Caco-2 (cell line): ENCODE measurements at regions of chr2 and their contacts with region 1.

Region 1: DNA sequence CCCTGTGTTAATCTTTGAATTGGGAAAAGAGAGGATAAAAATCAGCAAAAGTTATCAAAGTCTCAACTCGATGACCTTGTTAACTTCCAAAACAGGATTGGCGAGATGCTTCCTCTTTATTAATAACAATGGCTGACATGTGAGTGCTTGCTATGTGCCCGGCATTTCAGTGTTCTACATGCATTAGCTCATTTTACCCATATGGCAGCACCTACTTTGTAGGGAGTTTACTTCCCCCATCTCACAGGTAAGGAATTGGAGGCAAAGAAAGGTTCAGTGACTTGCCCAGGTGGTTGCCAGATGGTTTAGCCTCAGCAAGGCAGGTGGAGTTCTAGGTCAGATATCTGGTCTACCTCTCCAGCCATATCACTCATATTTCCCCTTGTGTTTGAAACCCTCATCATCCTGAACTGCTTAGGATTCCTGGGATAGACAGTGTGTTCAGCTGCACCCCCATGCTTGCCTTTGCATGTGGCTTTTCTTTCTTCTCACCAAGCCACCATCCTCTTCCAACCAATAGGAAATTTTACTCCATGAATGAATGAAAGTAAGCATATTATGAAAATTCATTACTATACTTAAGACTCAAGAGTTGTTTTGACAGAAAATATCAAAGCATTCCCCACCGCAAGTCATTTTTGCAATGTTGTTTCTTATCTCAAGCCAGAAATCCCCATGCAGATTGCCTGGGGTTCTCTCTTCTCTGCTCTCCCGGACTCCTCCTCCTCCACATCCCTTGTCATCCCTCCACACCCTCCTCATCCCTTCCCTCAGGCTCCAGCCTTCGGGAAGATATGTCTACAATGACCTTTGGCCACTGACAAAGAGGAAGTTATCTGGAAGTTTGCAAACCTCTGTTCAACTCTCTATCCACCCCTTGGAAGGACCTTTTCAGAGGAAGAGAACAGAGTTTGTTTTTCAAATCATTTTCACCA is 12.2 kb downstream of the TFCP2L1 start:
- DNase-seq: peak; percentile 66 to 78
- H3K4me3 ChIP-seq: no peak overlapping the region
- H3K4me3 Mint-ChIP-seq: peak overlapping the region; percentile 37
- H3K27ac Mint-ChIP-seq: peak overlapping the region; percentile 68
- H3K4me1 ChIP-seq: peaks cover 33% of the 10 kb centered on the region
- H3K4me1 Mint-ChIP-seq: peaks cover 18% of the 10 kb centered on the region
- H3K27me3 ChIP-seq: no peaks in the 10 kb centered on the region
- H3K27me3 Mint-ChIP-seq: no peaks in the 10 kb centered on the region
- CTCF ChIP-seq: no peak

Region 2: GRCh38 chr2:121283670-121284462 is 11.0 kb after region 1 on chr2:
- CTCF ChIA-PET with region 1: no interaction called
- POLR2A ChIA-PET with region 1: no interaction called
- intact Hi-C with region 1: loop called (anchors 1 kb)
- DNase-seq: no peak
- H3K4me3 ChIP-seq: peak overlapping the region; percentile 59
- H3K4me3 Mint-ChIP-seq: peak overlapping the region; percentile 90
- H3K27ac Mint-ChIP-seq: peak overlapping the region; percentile 55
- H3K4me1 ChIP-seq: peaks cover 12% of the 10 kb centered on the region
- H3K4me1 Mint-ChIP-seq: peaks cover 9% of the 10 kb centered on the region
- H3K27me3 ChIP-seq: no peaks in the 10 kb centered on the region
- H3K27me3 Mint-ChIP-seq: no peaks in the 10 kb centered on the region
- CTCF ChIP-seq: no peak